ENCODE measurements at regions of chr3 and their contacts with region 1.

Region 1: DNA sequence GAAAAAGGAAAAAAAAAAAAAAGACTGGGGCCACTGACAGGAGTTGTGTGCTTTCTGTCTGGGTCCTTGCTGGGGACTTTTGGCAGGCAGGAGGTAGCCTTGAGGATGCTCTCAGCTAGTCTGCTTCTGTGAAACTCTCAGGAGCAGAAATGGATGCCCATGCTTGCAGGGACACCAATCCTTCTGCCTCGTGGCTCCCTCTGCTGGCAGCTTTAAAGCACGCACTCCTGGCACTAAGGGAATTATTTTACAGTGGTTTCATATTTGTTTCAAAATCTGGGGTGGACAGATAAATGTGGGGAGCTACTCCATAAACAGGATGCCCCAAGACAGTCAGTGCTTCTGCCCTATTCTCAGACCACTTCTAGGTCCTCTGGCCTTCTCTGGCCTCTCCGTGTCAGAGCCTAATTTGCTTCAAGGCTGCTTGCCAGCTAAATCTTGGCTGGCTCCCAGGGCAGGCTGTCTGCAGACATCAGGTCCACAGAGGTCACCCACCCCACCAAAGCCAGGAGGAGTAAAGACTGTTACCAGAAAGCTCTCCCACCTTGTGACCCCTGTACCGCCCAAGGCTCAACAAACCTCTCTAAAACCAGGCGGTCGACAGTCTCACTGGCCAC is 17.1 kb downstream of the TRAIP start:
- DNase-seq: peak; percentile 94

Region 2: GRCh38 chr3:49703443-49703927 is 135.8 kb before region 1 on chr3:
- intact Hi-C with region 1: loop called in 1 of 2 experiments (anchors 5 kb)
- DNase-seq: no peak

Region 3: GRCh38 chr3:49802719-49803464 is 36.4 kb before region 1 on chr3 and contains the start of gene INKA1:
- intact Hi-C with region 1: loop called (anchors 2 kb)
- DNase-seq: peak; percentile 96
- total RNA-seq, gene INKA1: 5.6 to 5.9 TPM